ENCODE measurements at regions of chr17 and their contacts with region 1.

Region 1: DNA sequence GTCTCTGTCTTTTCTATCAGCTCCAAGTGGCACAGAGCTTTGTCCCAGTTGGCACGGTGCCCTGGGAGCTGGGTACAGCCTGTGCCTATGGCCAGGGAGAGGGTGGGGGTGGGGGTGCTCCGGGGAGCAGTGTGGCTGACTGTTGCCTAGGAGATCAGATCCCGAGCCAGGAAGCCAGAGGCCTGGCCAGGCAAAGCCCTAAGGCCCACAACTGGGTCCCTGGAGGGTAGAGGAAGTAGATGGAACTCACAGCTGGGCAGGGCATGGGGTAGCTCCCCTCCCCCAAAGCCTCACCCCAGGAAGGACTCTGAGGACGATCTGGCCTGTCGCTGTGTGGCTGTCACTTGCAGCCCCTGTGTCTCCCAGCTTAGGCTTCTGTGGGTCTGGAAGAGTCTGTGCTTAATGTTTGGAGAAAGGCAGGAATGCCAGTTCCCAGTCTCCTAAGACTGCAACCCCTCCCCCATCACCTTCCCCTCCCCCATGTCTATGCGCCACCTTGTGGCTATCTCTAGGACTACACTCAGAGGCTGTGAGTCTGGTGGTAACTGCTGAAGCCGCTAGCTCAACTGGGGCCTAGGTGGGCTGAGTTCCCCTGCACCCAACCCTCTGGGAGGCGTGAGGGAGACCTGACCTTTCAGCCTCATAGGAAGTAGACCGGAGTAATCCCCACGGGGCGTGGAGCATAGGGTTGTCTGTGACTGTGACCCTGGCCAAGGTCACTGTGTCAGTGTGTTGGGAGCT is 12.6 kb downstream of the THRA start:
- DNase-seq: peak; percentile 87
- ATAC-seq: peak; percentile 74
- H3K4me3 Mint-ChIP-seq: no peak overlapping the region
- H3K27ac Mint-ChIP-seq: peak overlapping the region; percentile 70; the same call in 1 of the 2 replicates
- H3K4me1 Mint-ChIP-seq: peaks cover 47% of the 10 kb centered on the region
- H3K27me3 Mint-ChIP-seq: no peaks in the 10 kb centered on the region
- CTCF ChIP-seq: peak; percentile 88

Region 2: GRCh38 chr17:39943702-39944392 is 131.5 kb before region 1 on chr17:
- CTCF ChIA-PET with region 1: no interaction called
- POLR2A ChIA-PET with region 1: no interaction called
- DNase-seq: no peak
- ATAC-seq: no peak
- H3K4me3 Mint-ChIP-seq: no peak overlapping the region
- H3K27ac Mint-ChIP-seq: no peak overlapping the region
- H3K4me1 Mint-ChIP-seq: peaks cover 11% of the 10 kb centered on the region
- H3K27me3 Mint-ChIP-seq: peaks cover 4% of the 10 kb centered on the region; the same call in 1 of the 2 replicates
- CTCF ChIP-seq: no peak

Region 3: DNA sequence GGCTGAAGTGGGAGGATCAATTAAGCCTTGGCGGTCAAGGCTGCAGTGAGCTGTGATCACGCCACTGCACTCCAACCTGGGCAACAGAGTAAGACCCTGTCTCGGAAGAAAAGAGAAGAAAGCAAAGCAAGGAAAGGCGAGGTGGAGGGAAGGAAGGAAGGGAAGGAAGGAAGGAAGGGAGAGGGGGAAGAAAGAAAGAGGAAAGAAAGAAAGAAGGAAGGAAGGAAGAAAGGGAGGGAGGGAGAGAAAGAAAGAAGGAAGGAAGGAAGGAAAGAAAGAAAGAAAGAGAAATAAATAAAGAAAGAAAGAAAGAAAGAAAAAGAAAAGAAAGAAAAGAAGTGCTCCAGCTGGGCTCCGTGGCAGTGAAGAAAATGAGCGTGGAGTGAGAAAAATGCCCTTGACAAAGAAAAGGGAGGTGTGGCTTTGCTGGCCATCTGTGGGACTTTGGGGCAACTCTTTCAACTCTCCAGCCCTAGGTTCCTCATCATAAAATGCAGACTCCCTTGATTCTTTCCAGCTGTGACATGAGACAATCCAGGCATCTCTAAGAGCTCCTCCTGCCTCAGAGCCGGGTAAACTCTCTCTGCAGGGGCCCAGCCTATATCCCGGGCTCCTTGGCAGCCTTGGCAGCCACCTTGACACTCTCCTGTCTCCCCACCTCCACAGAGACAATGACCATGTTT is 110.2 kb before region 1 on chr17:
- CTCF ChIA-PET with region 1: no interaction called
- POLR2A ChIA-PET with region 1: no interaction called
- DNase-seq: no peak
- ATAC-seq: no peak
- H3K4me3 Mint-ChIP-seq: no peak overlapping the region
- H3K27ac Mint-ChIP-seq: no peak overlapping the region
- H3K4me1 Mint-ChIP-seq: peaks cover 4% of the 10 kb centered on the region; the same call in 1 of the 2 replicates
- H3K27me3 Mint-ChIP-seq: peaks cover 7% of the 10 kb centered on the region; the same call in 1 of the 2 replicates
- CTCF ChIP-seq: no peak

Region 4: DNA sequence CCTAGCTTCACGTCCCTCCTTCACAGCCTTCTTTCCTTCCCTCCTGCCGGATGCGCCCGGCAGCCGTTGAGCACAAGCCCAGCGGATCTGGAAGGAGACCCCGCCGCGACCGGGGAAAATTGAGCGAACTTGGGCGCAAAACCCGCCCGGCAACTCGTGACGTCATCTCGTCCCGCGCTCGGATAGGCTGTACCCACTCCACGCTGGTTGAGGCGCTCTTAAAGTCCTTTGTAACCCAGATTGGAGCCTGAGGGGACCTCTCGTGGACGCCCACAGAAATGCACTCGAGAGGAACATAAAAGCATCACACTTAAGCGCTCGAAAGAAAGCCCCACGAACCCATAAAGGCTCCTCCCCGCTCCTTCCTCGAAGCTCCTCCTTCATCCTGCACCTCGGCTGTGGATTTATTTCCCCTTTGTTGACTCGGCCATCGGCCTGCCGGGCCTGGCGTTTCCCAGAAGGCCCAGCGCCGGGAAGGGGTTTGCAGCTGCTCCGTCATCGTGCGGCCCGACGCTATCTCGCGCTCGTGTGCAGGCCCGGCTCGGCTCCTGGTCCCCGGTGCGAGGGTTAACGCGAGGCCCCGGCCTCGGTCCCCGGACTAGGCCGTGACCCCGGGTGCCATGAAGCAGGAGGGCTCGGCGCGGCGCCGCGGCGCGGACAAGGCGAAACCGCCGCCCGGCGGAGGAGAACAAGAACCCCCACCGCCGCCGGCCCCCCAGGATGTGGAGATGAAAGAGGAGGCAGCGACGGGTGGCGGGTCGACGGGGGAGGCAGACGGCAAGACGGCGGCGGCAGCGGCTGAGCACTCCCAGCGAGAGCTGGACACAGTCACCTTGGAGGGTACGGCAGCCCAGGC is 94.8 kb before region 1 on chr17 and contains the start of gene PSMD3:
- CTCF ChIA-PET with region 1: interaction called, 10 read pairs
- POLR2A ChIA-PET with region 1: interaction called, 3 read pairs
- DNase-seq: peak; percentile 98
- ATAC-seq: peak; percentile 94
- H3K4me3 Mint-ChIP-seq: peak within 1 kb of the TSS; percentile 89
- H3K27ac Mint-ChIP-seq: peak within 1 kb of the TSS; percentile 97
- H3K4me1 Mint-ChIP-seq: peaks cover 25% of the 10 kb centered on the region
- H3K27me3 Mint-ChIP-seq: no peaks in the 10 kb centered on the region
- CTCF ChIP-seq: peak; percentile 52
- total RNA-seq, gene PSMD3: 157 to 190 TPM (median 158 TPM) in 3 replicates

Region 5: DNA sequence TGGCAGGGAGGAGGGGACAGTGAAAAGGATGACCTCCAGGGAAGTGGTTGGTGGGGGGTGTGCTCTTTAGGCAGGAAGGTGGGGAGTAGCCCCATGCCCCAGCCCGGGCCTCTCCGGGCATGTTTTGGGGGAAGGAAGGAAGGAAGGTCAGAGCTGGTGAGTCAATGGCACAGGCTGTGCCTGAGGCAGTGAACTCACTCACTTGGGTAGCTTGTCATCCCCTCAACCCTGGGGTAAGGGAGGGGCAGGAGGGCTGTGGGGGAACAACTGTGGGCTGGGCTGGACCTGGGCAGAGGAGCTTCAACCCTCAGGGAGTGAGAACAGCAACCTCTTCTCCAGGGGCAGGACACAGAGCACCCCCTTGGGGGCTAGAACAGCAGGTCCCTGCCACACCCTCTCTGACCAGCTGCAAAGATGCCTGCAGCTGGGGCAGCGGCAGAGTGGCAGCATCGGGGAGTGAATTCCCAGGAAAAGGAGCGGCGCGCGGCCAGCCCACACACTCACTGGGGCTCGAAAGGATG is 53.9 kb before region 1 on chr17:
- CTCF ChIA-PET with region 1: interaction called, 22 read pairs
- POLR2A ChIA-PET with region 1: no interaction called
- DNase-seq: no peak
- ATAC-seq: no peak
- H3K4me3 Mint-ChIP-seq: no peak overlapping the region
- H3K27ac Mint-ChIP-seq: peak overlapping the region; percentile 53; the same call in 1 of the 2 replicates
- H3K4me1 Mint-ChIP-seq: peaks cover 24% of the 10 kb centered on the region
- H3K27me3 Mint-ChIP-seq: no peaks in the 10 kb centered on the region
- CTCF ChIP-seq: no peak

Region 6: DNA sequence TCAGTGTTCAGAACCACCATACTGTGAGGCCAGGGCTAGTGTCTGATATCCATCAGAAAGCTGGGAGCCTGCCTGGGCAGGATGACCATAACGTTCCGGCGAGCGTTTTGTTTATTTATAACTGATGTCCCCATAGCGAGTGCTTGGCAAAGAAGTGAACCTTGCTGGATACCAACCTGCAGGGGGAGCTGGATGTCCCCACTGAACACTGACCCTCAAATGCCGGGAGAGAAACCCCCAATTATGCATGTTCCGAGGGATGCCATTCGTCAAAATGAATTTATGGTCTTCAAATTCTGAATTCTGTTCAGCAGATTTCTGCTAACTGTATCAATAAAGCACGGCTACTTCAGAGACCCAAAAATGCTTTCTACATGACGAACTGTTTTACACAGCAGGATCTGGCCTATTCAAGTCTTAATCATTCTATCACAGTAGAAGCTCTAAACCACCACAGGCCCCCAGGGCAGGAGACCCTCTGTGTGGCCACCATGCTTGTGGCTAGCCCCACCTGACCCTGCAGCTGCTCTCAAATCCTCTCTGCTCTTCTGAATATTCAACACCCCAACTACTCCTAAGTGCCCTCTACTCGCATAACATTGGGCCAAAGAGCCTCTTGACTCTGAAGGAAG is 36.4 kb before region 1 on chr17:
- CTCF ChIA-PET with region 1: interaction called, 193 read pairs
- POLR2A ChIA-PET with region 1: interaction called, 6 read pairs
- DNase-seq: peak; percentile 59
- ATAC-seq: peak; percentile 65
- H3K4me3 Mint-ChIP-seq: 0 out of 2 replicates have a peak overlapping the region, but pooled peaks have one; percentile 6
- H3K27ac Mint-ChIP-seq: peak overlapping the region; percentile 62
- H3K4me1 Mint-ChIP-seq: peaks cover 18% of the 10 kb centered on the region
- H3K27me3 Mint-ChIP-seq: no peaks in the 10 kb centered on the region
- CTCF ChIP-seq: 0 out of 2 replicates have a peak, but pooled peaks have one; percentile 11

Region 7: DNA sequence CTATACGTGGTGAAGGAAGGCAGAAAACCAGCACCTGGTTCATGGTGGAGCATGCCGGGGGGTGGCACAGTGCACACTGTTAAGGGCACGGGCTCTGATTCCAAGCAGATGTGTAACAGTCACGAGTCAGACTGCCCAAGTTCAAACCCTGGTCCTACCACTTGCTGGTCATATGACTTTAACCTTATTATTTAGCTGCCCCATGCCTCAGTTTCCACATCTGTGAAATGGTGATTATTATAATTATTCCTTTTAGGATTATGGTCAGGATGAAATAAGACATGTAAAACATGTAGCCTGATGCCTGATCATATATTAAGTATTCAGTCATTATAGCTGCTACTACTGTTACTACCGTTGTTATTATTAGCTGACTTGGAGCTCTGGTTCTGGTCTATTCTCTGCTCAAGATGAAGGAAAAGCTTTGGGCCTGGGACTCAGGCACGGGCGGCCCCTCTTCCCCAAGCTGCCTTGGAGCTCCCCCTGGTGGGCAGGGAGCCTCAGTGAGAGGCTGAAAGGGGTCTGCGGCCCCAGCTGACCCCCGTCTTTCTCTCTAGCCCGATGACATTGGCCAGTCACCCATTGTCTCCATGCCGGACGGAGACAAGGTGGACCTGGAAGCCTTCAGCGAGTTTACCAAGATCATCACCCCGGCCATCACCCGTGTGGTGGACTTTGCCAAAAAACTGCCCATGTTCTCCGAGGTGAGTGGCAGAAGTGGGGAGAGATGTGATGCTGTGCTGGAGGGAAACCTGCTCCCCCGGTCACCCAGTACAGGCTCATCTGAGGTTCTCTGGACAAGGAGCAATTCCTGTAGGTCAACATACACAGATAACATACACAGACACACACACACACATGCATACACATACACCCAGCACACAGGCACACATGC is 11.0 kb after region 1 on chr17:
- CTCF ChIA-PET with region 1: interaction called, 111 read pairs
- POLR2A ChIA-PET with region 1: interaction called, 3 read pairs
- DNase-seq: peak; percentile 88
- ATAC-seq: peak; percentile 85
- H3K4me3 Mint-ChIP-seq: no peak overlapping the region
- H3K27ac Mint-ChIP-seq: no peak overlapping the region
- H3K4me1 Mint-ChIP-seq: peaks cover 16% of the 10 kb centered on the region
- H3K27me3 Mint-ChIP-seq: no peaks in the 10 kb centered on the region
- CTCF ChIP-seq: peak; percentile 84

Region 8: GRCh38 chr17:40098846-40099618 is 23.7 kb after region 1 on chr17:
- CTCF ChIA-PET with region 1: interaction called, 45 read pairs
- POLR2A ChIA-PET with region 1: interaction called, 4 read pairs
- DNase-seq: peak; percentile 99
- ATAC-seq: peak; percentile 79
- H3K4me3 Mint-ChIP-seq: peak overlapping the region; percentile 79
- H3K27ac Mint-ChIP-seq: peak overlapping the region; percentile 44
- H3K4me1 Mint-ChIP-seq: peaks cover 51% of the 10 kb centered on the region
- H3K27me3 Mint-ChIP-seq: peaks cover 47% of the 10 kb centered on the region
- CTCF ChIP-seq: no peak

Region 9: GRCh38 chr17:40121181-40122135 is 46.1 kb after region 1 on chr17 and contains the start of gene MSL1:
- CTCF ChIA-PET with region 1: interaction called, 12 read pairs
- POLR2A ChIA-PET with region 1: interaction called, 3 read pairs
- DNase-seq: peak; percentile 84
- ATAC-seq: peak; percentile 29
- H3K4me3 Mint-ChIP-seq: peak within 1 kb of the TSS; percentile 84
- H3K27ac Mint-ChIP-seq: peak within 1 kb of the TSS; percentile 90
- H3K4me1 Mint-ChIP-seq: peaks cover 26% of the 10 kb centered on the region
- H3K27me3 Mint-ChIP-seq: no peaks in the 10 kb centered on the region
- CTCF ChIP-seq: no peak
- total RNA-seq, gene MSL1: 69.2 to 78.1 TPM (median 73.7 TPM) in 3 replicates

Region 10: DNA sequence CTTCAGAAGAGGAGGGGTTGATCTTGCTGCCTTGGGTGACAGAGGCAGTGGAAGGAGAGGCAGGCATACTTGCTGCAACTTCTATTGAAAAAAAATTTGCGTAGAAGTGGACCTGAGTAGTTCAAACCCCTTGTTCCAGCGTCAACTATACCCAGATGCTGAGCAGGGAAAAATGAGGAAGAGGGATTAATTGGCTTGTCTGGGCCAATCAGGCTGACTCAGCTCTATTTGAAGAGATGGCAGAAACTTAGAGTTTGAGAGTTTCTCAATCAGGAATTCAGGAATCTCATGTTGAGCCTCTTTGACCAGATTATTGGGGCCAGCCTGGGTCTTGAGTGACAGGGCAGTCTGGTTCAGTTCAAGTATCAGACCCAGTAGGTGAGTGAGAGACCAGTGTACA is 82.6 kb after region 1 on chr17:
- CTCF ChIA-PET with region 1: no interaction called
- POLR2A ChIA-PET with region 1: no interaction called
- DNase-seq: no peak
- ATAC-seq: no peak
- H3K4me3 Mint-ChIP-seq: no peak overlapping the region
- H3K27ac Mint-ChIP-seq: no peak overlapping the region; the same call in 1 of the 2 replicates
- H3K4me1 Mint-ChIP-seq: no peaks in the 10 kb centered on the region
- H3K27me3 Mint-ChIP-seq: no peaks in the 10 kb centered on the region
- CTCF ChIP-seq: no peak